ENCODE measurements at regions of chr6 and their contacts with region 1.

Region 1: GRCh38 chr6:18392346-18392884 is 5.3 kb downstream of the RNF144B start:
- DNase-seq: peak; percentile 51
- H3K4me3 ChIP-seq: peak overlapping the region; percentile 48
- H3K27ac ChIP-seq: peak overlapping the region; percentile 58
- H3K4me1 ChIP-seq: peaks cover 63% of the 10 kb centered on the region
- CTCF ChIP-seq: peak; percentile 75

Region 2: GRCh38 chr6:18264219-18264922 is 128.0 kb before region 1 on chr6 and contains the start of gene DEK:
- CTCF ChIA-PET with region 1: no interaction called
- POLR2A ChIA-PET with region 1: interaction called, 3 read pairs
- intact Hi-C with region 1: loop called (anchors 2 kb)
- DNase-seq: peak; percentile 86
- H3K4me3 ChIP-seq: peak within 1 kb of the TSS; percentile 90
- H3K27ac ChIP-seq: peak within 1 kb of the TSS; percentile 91
- H3K4me1 ChIP-seq: peaks cover 44% of the 10 kb centered on the region
- CTCF ChIP-seq: peak; percentile 73
- total RNA-seq, gene DEK: 235 and 462 TPM in 2 replicates

Region 3: DNA sequence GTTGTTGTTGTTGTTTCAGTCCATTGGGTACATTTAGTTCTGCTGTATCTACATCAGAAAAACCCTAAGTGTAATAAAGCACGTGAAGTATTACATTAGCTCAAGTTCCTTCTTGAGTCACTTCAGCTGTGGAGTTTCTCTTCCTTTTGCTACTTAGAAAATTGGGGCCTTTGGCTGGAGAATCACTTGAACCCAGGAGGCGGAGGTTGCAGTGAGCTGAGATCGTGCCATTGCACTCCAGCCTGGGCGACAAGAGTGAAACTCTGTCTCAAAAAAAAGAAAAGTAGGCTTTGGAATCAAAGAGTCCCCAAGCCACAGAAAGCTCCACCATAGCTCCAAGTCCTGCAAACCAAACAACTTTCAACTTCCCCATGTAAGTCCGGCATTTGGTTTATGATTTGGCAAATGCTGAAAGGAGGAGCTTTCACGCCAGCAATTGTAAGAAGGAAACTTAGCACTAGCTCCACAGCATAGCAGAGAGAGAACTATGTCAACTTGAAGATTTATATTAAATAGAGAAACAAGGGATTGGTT is 61.8 kb before region 1 on chr6:
- CTCF ChIA-PET with region 1: interaction called, 3 read pairs
- POLR2A ChIA-PET with region 1: interaction called, 128 read pairs
- intact Hi-C with region 1: loop called (anchors 1 kb)
- DNase-seq: peak; percentile 70
- H3K4me3 ChIP-seq: peak overlapping the region; percentile 50
- H3K27ac ChIP-seq: peak overlapping the region; percentile 92
- H3K4me1 ChIP-seq: peaks cover 62% of the 10 kb centered on the region
- CTCF ChIP-seq: no peak

Region 4: DNA sequence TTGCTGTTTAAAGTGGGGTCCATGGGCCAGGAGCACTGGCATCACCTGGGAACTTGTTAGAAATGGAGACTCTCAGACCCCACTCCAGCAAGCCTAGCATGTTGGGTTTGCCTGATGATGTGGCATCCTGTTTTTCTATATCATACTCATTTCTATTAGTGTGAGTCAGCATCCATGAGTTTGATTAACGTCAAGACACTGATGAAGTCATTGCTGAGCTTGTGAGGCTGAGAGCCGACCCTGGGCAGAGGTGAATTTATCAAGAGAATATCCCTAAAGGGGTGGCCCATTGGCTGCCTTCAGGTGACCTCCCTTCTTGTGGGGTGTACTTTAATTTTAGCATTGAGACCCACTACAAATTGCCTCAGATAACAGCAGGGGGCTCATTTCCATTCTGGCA is 48.7 kb before region 1 on chr6:
- CTCF ChIA-PET with region 1: interaction called, 6 read pairs
- POLR2A ChIA-PET with region 1: interaction called, 32 read pairs
- intact Hi-C with region 1: loop called (anchors 1 kb)
- DNase-seq: no peak
- H3K4me3 ChIP-seq: peak overlapping the region; percentile 26
- H3K27ac ChIP-seq: peak overlapping the region; percentile 89
- H3K4me1 ChIP-seq: peaks cover 72% of the 10 kb centered on the region
- CTCF ChIP-seq: peak; percentile 44; the same call in 1 of the 2 replicates

Measured in OCI-LY7 (cell line).